Posterior vena cava (tissue), 2 donors: ENCODE measurements at regions of chr9 and their contacts with region 1.

Region 1: DNA sequence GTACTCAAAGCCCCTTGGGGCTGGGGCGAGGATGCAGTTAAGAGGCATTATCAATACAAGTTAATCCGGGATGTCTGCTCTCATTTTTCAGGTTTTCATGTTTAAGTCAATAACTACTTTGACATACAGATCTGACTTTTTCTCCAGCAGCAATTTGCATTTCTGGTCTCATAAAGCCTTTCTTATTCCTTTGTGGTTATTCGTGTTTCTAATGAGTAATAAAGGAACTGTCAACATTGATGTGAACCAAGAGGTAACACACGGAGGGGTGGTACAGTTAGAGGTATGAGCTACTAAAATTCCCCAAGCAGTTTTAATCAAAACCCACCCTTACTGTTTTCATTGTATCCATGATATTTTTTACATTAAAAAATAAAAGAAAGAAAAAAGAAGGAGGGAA is 138.0 kb upstream of the NFIB start:
- DNase-seq: no peak

Region 2: DNA sequence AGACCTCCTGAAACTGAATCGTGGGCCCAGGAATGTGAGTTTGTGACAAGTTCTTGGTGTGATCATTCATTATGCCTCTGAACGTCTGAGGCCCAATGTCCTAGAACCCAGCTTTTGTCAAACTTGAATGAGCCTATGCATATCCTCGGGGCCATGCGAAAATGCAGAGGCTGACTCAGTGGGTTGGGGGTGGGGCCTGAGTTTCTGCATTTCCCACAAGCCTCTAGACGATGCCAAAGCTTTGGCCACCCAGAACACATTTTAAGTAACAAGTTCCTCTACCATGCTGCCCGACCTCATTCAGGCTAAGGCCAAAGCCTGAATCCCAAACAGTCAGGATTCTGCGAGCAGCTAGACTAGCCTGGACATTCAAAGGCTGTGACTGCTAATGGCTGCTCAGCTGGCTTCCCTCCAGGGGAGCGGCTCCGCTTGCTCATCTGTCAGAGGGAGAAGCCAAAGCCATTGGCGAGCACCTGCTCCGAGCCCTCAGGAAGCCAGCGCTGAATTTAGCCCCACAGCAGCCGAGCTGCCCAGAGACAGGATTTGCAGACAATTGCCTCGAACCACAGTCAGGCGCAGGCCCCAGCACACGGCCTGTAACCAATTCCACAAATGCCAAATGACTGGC is 63.7 kb after region 1 on chr9:
- intact Hi-C with region 1: loop called in 1 of 2 experiments (anchors 2 kb)
- DNase-seq: no peak